MCF 10A (cell line): ENCODE measurements at regions of chr5 and their contacts with region 1.

Region 1: DNA sequence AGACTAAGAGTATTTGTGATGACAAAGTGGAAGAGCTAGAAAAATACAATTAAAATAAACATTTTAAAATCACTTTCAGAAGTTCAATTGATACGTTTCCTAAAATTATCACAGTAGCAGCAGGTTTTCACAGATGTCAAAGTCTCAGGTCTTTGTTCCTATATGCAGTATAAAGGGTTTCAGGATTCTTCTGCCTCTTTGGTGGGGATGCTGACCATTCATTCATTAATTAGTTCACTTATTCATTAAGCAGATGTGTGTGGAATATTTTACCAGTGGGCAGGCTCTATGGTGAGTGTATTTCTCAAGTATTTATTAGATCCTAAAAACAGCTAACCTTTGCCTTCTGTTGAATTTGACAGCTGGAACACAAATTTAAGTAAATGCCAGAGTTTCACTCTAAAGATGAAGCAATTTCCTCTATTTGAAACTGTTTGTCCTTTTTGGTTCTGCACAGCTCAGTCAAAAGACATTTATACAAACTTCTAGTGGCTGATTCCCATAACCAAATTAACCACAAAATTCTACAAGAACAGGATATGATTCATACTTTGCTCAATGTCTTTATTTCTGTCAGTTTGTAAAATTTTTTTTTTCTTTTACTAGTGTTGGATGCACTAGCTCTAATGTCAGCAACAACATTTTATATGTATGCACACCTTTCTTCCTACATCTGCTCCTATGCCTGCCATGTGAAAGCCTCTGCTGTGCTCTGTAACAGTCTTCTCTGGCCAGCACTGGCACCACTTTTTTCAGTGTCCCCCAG is 75.9 kb upstream of the PRR16 start:
- DNase-seq: peak; percentile 95
- H3K4me3 Mint-ChIP-seq: peak overlapping the region; percentile 9
- H3K27ac Mint-ChIP-seq: peak overlapping the region; percentile 96
- H3K4me1 Mint-ChIP-seq: peaks cover 51% of the 10 kb centered on the region
- H3K27me3 Mint-ChIP-seq: no peaks in the 10 kb centered on the region
- CTCF ChIP-seq: no peak

Region 2: DNA sequence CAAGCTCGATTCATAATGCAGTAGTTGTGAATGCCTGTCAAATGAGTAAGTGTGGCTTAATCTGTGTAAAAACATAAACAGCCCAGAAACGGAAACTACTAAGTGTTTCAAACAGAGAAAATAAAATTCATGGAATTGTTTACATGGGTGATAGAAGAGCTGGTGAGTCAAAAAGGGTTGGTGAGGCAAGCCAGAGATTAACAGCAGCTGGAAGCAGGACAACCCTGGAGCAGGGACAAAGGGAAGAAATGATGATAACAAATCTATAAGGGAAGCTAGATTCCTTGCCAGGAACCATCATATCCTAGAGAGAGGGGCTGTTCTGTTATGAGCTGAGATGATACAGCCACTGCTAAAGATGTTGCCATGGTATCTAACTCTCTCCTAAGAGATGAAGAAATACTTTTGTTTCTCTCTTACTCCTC is 57.9 kb after region 1 on chr5:
- CTCF ChIA-PET with region 1: no interaction called
- POLR2A ChIA-PET with region 1: interaction called, 3 read pairs
- intact Hi-C with region 1: loop called (anchors 5 kb)
- DNase-seq: peak; percentile 86
- H3K4me3 Mint-ChIP-seq: peak overlapping the region; percentile 44
- H3K27ac Mint-ChIP-seq: peak overlapping the region; percentile 97
- H3K4me1 Mint-ChIP-seq: peaks cover 26% of the 10 kb centered on the region
- H3K27me3 Mint-ChIP-seq: no peaks in the 10 kb centered on the region
- CTCF ChIP-seq: no peak